ENCODE measurements at regions of chr19 and their contacts with region 1.

Region 1: DNA sequence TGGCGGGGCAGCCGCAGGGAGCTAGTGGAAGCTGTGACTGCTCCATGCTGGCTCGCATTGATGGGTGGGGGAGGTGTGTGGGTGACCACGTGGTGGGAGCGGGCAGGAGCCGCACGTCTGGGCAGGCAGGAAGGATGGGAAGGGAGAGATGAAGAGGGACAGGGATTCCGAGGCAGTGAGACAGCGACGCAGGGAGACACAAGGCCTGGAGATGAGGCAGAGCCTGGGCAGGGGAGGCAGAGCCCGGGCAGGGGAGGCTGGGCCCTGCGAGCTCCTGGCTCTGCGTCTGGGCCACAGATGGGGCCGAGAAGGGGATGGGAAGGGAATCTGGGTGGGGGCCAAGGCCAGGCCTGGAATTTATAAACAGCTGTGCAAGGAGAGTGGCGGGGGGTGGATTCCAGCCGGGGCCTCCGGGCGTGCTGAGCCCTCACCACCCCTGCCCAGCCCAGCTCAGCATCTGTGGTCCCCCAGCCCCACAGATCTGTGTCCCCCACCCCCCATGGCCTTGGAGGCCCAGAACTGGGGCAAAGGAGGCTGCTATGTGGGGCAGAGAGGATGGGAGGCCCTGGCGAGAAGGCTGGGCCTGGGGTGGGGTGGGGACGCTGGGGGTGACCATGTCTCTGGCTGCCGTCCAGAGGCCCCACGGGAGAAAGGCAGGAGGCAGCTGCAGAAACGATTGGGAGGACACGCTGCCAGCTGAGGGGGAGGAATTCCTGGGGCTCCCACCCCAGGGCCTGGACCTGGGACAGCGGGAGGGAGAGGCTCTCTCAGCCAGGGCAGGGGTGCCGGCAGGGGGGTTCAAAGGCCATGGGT is 6.0 kb downstream of the EHD2 start:
- DNase-seq: peak; percentile 70
- H3K4me3 ChIP-seq: peak overlapping the region in 1 of 3 experiments; percentile 6
- H3K27ac ChIP-seq: peak overlapping the region; percentile 32
- H3K4me1 ChIP-seq: peaks cover 16% of the 10 kb centered on the region
- H3K27me3 ChIP-seq: no peaks in the 10 kb centered on the region
- CTCF ChIP-seq: no peak
- POLR2A ChIP-seq: no peak

Region 2: DNA sequence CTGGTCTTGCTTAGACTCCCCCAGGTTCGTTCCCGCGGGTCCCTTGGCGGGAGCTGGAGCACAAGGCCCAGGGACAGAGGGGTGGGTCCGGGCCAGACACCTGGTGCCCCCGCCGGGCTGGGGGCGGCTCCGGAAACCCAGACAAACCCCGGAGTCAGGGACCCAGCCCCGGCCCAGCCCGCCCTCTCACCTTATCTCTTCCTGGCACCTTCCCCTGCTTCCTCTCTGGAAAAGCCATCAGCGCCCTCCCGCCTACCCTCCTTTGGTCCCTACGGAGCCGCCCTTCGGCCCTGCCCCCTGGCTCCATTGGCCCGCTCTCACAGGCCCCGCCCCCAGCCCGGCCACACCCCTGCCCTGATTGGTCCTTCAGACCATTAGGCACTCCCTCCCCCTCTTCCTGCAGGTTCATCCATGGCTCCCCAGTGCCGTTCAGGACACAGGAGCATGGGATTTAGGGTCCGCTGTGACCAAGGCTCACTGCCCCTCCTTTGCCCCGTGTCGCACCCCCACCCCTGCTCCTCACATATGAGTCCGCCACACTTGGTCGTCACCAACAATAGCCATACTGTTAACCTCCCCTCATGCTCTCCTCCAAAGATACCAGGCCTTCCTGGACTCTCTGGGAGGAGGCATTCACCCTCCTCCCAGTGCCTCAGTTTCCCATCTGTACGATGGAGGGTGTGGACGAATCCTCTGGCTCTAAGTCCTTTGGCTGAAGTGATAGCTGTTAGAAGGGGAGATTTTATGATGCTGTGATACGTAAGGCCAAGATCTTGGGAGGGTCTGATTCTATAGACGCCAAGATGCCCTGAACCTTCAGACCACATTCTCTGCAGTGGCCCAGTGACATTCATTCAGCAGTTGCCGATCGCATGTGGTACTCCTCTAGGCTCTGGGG is 11.0 kb after region 1 on chr19:
- CTCF ChIA-PET with region 1: interaction called, 32 read pairs
- POLR2A ChIA-PET with region 1: interaction called, 3 read pairs
- dilution Hi-C with region 1: no loop called
- intact Hi-C with region 1: loop called (anchors 1 kb)
- DNase-seq: peak; percentile 93
- H3K4me3 ChIP-seq: peak overlapping the region in 1 of 3 experiments; percentile 18
- H3K27ac ChIP-seq: peak overlapping the region; percentile 97
- H3K4me1 ChIP-seq: peaks cover 23% of the 10 kb centered on the region
- H3K27me3 ChIP-seq: no peaks in the 10 kb centered on the region
- CTCF ChIP-seq: no peak
- POLR2A ChIP-seq: peak; percentile 21

Region 3: GRCh38 chr19:47745010-47745901 is 26.0 kb after region 1 on chr19 and contains the start of gene NOP53:
- CTCF ChIA-PET with region 1: interaction called, 258 read pairs
- POLR2A ChIA-PET with region 1: interaction called, 6 read pairs
- dilution Hi-C with region 1: no loop called
- intact Hi-C with region 1: no loop called
- DNase-seq: peak; percentile 98
- H3K4me3 ChIP-seq: peak within 1 kb of the TSS; percentile 66 to 87 (median 80)
- H3K27ac ChIP-seq: peak within 1 kb of the TSS; percentile 78
- H3K4me1 ChIP-seq: peaks cover 21% of the 10 kb centered on the region
- H3K27me3 ChIP-seq: no peaks in the 10 kb centered on the region
- CTCF ChIP-seq: no peak
- POLR2A ChIP-seq: peak; percentile 85
- total RNA-seq, gene NOP53: 150 and 189 TPM in 2 replicates

Region 4: DNA sequence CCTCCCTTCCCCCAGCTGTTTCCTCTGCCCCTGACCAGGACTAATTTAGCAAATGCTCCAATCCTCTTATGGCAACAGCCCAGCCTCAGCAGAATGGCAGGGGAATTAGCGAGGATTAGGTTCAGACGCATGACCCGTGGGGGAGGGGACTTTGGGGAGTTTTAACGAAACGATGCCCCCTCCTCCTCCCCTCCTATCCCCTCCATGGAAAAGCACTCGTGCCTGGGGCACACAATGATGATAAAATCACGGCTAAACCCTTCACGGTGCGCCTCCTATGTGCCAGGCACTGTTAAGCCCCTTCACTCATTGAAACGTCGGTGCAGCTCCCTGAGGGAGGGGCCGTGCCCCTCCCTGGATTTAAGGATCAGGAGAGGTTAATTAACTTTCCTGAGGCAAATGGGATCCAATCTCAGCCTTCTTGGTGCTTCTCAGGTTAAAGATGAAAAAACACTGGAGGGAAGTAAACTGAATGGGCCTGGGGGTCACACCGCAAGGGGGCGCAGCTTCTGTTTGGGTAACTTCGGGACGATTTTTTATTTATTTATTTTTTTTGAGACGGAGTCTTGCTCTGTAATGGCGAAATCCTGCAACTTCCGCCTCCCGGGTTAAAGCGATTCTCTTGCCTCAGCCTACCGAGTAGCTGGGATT is 129.7 kb after region 1 on chr19:
- CTCF ChIA-PET with region 1: no interaction called
- POLR2A ChIA-PET with region 1: no interaction called
- dilution Hi-C with region 1: no loop called
- intact Hi-C with region 1: no loop called
- DNase-seq: no peak
- H3K4me3 ChIP-seq: no peak overlapping the region
- H3K27ac ChIP-seq: no peak overlapping the region
- H3K4me1 ChIP-seq: no peaks in the 10 kb centered on the region
- H3K27me3 ChIP-seq: peaks cover 9 to 19% of the 10 kb centered on the region in 2 experiments
- CTCF ChIP-seq: peak; percentile 29 to 38
- POLR2A ChIP-seq: no peak

Measured in endothelial cell of umbilical vein (primary cell).